Common myeloid progenitor, CD34-positive (primary cell): ENCODE measurements at regions of chr6 and their contacts with region 1.

Region 1: GRCh38 chr6:38493931-38494547 is 145.7 kb downstream of the BTBD9 start:
- DNase-seq: peak; percentile 69 to 87 (median 80)
- H3K4me3 ChIP-seq: no peak overlapping the region
- H3K27ac ChIP-seq: no peak overlapping the region
- H3K4me1 ChIP-seq: no peaks in the 10 kb centered on the region
- H3K27me3 ChIP-seq: no peaks in the 10 kb centered on the region

Region 2: DNA sequence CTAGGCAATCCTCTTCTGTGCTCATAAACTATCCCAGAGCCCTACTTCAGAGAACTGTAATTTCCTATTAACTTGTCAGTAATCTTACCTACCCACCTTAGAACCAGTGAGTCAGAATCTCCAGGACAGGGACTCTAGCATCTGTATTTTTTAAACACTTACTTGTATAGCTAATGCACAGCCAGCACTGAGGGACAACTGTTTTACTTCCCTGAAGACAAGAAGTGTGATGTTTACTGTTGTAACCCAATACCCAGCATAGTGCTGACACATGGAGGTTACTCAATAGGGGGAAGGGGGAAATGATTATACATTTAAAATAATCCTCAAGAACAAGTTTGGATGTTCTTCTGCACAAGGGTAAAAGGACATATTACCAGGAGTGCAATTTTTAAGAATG is 14.9 kb after region 1 on chr6:
- CTCF ChIA-PET with region 1: interaction called, 11 read pairs
- POLR2A ChIA-PET with region 1: no interaction called
- DNase-seq: peak in 2 of 3 donors; percentile 6 to 13
- H3K4me3 ChIP-seq: no peak overlapping the region
- H3K27ac ChIP-seq: no peak overlapping the region
- H3K4me1 ChIP-seq: peaks cover 0 to 3% (median 0%) of the 10 kb centered on the region in 4 experiments
- H3K27me3 ChIP-seq: no peaks in the 10 kb centered on the region

Region 3: DNA sequence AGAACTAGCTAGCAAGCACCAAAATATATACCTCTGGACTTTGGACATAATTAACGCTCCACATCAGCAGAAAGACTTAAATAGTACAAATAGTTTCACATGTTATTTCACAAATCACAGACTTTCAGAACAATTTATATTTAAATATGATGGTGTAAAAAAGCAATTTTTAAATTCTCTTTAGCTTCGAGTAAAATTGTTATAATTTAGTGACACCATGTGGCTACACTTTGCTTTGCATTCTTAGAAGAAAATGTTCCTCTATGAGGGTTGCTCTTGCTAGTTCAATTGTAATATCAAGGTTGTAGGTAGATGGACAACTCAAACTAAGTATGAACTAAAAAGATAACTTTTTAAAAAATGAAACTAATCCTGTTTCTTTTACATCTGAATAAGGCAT is 76.7 kb after region 1 on chr6:
- CTCF ChIA-PET with region 1: interaction called, 10 read pairs
- POLR2A ChIA-PET with region 1: no interaction called
- DNase-seq: peak; percentile 19 to 52 (median 35)
- H3K4me3 ChIP-seq: no peak overlapping the region
- H3K27ac ChIP-seq: no peak overlapping the region
- H3K4me1 ChIP-seq: peaks cover 0 to 7% (median 3%) of the 10 kb centered on the region in 4 experiments
- H3K27me3 ChIP-seq: no peaks in the 10 kb centered on the region